ENCODE measurements at regions of chr2 and their contacts with region 1.

Region 1: DNA sequence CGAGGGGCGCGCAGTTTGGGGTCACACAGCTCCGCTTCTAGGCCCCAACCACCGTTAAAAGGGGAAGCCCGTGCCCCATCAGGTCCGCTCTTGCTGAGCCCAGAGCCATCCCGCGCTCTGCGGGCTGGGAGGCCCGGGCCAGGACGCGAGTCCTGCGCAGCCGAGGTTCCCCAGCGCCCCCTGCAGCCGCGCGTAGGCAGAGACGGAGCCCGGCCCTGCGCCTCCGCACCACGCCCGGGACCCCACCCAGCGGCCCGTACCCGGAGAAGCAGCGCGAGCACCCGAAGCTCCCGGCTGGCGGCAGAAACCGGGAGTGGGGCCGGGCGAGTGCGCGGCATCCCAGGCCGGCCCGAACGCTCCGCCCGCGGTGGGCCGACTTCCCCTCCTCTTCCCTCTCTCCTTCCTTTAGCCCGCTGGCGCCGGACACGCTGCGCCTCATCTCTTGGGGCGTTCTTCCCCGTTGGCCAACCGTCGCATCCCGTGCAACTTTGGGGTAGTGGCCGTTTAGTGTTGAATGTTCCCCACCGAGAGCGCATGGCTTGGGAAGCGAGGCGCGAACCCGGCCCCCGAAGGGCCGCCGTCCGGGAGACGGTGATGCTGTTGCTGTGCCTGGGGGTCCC is at the start of gene ITGA4:
- DNase-seq: peak; percentile 97
- H3K4me3 Mint-ChIP-seq: peak within 1 kb of the TSS; percentile 89
- H3K27ac Mint-ChIP-seq: peak within 1 kb of the TSS; percentile 93
- H3K4me1 Mint-ChIP-seq: peaks cover 45% of the 10 kb centered on the region
- H3K27me3 Mint-ChIP-seq: no peaks in the 10 kb centered on the region
- total RNA-seq, gene ITGA4: 106 and 109 TPM in 2 replicates

Region 2: DNA sequence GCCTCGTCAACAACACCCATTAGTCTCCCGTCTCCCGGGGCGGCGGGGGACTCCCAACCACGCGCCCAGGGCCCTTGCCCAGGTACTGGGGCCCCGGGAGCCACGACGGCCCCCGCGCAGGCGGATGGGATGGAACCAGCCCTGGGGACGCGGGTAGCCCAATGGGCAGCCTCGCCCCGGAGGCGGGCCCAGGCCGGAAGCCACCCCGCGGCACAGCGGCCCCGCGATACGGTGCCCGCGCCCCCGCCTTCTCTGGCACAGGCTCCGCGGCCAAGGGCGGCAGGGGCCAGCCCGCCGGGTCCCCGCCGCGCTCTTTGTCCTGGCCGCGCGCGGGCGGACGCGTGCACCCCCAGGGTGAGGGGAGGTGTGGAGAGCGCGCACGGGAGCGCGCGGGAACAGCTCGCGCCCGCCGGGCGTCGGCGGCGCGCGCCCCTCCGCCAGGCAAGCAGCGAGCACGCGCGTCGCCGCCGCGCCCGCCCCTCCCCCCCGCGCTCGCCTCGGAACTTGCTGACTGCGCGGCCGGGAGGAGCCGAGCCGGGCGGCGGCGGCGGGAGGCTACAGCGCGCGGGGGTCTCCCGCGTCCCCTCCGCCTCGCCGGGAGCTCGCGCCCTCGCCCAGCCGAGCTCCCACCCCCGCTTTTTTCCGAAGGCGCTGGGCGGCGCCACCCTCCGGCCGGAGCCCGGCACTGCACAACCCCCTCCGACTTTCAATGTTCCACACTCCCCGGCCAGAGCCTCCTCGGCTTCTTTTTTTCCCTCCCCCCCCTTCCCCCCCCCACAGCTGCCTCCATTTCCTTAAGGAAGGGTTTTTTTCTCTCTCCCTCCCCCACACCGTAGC is 476.9 kb before region 1 on chr2 and contains the start of gene UBE2E3:
- intact Hi-C with region 1: loop called (anchors 5 kb)
- DNase-seq: peak; percentile 94
- H3K4me3 Mint-ChIP-seq: peak within 1 kb of the TSS; percentile 89
- H3K27ac Mint-ChIP-seq: peak within 1 kb of the TSS; percentile 97
- H3K4me1 Mint-ChIP-seq: peaks cover 34% of the 10 kb centered on the region
- H3K27me3 Mint-ChIP-seq: peaks cover 38% of the 10 kb centered on the region
- total RNA-seq, gene UBE2E3: 53.9 and 54.9 TPM in 2 replicates

Region 3: GRCh38 chr2:181140414-181140813 is 316.8 kb before region 1 on chr2:
- intact Hi-C with region 1: loop called (anchors 2 kb)
- DNase-seq: no peak
- H3K4me3 Mint-ChIP-seq: peak overlapping the region; percentile 79
- H3K27ac Mint-ChIP-seq: peak overlapping the region; percentile 80
- H3K4me1 Mint-ChIP-seq: peaks cover 56% of the 10 kb centered on the region
- H3K27me3 Mint-ChIP-seq: no peaks in the 10 kb centered on the region

Region 4: DNA sequence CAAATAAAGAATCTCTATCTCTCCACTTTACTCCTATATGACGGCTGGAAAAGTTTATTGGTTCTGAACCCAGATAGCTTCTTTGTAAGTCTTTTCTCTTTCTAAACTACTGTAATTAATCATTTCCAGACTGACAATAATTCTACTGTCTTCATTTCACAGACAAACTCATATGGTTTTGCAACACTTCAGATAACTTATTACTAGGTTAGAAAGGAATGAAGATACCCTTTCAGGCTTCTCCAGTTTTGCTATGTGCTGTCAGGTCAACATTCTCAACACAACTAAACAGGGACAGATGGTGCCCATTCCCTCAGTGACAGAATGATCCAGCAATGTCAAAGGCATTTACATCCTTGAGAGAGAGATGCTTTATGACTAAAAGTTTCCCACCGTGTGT is 198.5 kb before region 1 on chr2:
- intact Hi-C with region 1: no loop called
- DNase-seq: peak; percentile 40
- H3K4me3 Mint-ChIP-seq: no peak overlapping the region
- H3K27ac Mint-ChIP-seq: no peak overlapping the region
- H3K4me1 Mint-ChIP-seq: peaks cover 2% of the 10 kb centered on the region
- H3K27me3 Mint-ChIP-seq: no peaks in the 10 kb centered on the region

Region 5: GRCh38 chr2:181305301-181306123 is 151.7 kb before region 1 on chr2:
- intact Hi-C with region 1: loop called (anchors 1 kb)
- DNase-seq: peak; percentile 91
- H3K4me3 Mint-ChIP-seq: peak overlapping the region; percentile 66
- H3K27ac Mint-ChIP-seq: peak overlapping the region; percentile 89
- H3K4me1 Mint-ChIP-seq: peaks cover 65% of the 10 kb centered on the region
- H3K27me3 Mint-ChIP-seq: no peaks in the 10 kb centered on the region

Region 6: DNA sequence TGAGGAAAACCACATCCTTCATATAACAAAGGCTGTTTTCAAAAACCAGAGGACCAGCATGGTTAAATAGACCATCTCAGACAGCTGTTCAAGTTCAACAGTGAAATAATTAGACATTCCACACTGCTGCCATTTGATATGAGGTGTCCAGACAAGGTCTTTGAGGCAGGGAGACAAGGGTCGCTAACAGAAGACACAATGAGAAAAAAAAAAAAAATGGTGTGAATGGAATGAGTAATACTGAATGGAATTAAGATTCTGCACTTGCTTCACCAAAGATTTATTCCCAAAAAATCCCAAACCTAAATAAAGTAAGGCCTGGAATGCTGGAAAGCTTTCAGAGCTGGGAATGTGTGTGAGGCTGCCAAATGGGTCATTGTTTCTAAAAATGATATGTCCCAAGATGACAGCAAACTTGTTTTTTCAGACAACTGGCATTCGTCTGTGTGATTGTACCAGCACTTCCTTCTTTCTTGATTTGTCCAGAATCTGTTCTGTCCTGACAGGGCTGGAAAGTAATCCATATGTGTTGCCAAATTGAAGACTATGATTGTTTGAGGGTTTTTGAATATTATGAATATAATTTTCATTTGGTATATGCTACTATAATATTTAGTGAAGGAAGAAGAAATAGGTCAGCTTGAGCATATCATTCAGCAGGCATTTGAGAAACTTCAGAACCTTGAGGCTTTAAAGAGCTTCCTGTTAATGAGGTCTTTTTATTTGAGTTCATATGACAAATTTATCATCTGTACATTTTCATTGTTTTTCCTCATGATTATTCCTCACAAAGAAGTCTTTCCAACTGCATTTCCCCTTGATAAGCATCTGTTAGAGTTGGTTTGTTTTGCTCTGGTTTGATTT is 85.2 kb before region 1 on chr2:
- intact Hi-C with region 1: no loop called
- DNase-seq: no peak
- H3K4me3 Mint-ChIP-seq: no peak overlapping the region
- H3K27ac Mint-ChIP-seq: no peak overlapping the region
- H3K4me1 Mint-ChIP-seq: peaks cover 17% of the 10 kb centered on the region
- H3K27me3 Mint-ChIP-seq: no peaks in the 10 kb centered on the region

Region 7: GRCh38 chr2:181438261-181438660 is 19.0 kb before region 1 on chr2:
- intact Hi-C with region 1: loop called (anchors 2 kb)
- DNase-seq: peak; percentile 73
- H3K4me3 Mint-ChIP-seq: no peak overlapping the region
- H3K27ac Mint-ChIP-seq: no peak overlapping the region
- H3K4me1 Mint-ChIP-seq: peaks cover 23% of the 10 kb centered on the region
- H3K27me3 Mint-ChIP-seq: peaks cover 3% of the 10 kb centered on the region

Region 8: DNA sequence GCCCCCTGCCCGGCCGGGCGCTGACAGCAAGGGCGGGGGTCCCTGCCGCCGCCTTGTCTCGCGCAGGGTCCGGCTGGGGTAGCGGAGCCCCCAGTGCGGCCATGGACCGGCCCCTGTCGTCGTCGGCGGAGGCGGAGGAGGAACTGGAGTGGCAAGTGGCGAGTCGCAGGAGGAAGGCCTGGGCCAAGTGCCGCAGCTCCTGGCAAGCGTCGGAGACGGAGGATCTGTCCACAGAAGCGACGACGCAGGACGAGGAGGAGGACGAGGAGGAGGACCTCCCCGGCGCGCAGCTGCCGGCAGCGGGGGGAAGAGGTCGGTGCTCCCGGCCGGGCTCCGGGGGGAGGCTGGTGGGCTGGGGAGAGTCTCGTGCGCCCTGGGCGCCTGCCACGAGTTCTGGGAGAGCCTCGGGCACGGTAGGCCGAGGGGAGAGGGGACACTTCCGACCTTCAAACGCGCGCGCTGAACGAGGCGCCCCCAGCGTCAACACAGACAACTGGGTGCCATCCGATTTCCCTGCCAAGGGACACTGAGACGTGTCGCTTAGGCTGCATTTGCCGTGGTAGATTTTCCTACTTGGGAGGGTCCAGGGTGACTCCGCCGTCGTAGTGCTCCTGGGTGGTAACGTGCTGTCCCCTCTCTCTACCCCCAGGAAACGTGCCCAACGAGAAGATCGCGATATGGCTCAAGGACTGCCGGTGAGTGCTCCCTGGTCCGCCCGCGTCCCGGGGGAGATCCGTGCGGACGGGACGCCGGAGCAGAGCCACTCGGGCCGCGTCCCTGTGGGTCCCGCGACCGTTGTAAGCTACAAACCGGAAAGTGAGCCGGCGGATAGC is 435.0 kb after region 1 on chr2:
- intact Hi-C with region 1: loop called (anchors 5 kb)
- DNase-seq: peak; percentile 91
- H3K4me3 Mint-ChIP-seq: peak overlapping the region; percentile 100
- H3K27ac Mint-ChIP-seq: peak overlapping the region; percentile 97
- H3K4me1 Mint-ChIP-seq: peaks cover 29% of the 10 kb centered on the region
- H3K27me3 Mint-ChIP-seq: peaks cover 27% of the 10 kb centered on the region

Measured in activated CD4-positive, alpha-beta T cell treated with anti-CD3 and anti-CD28 coated beads, Interleukin-2, amount 10 ng/mL, durations not matched to agents 24 days and 14 days (primary cell).